A549 (cell line): ENCODE measurements at regions of chr10 and their contacts with region 1.

Region 1: DNA sequence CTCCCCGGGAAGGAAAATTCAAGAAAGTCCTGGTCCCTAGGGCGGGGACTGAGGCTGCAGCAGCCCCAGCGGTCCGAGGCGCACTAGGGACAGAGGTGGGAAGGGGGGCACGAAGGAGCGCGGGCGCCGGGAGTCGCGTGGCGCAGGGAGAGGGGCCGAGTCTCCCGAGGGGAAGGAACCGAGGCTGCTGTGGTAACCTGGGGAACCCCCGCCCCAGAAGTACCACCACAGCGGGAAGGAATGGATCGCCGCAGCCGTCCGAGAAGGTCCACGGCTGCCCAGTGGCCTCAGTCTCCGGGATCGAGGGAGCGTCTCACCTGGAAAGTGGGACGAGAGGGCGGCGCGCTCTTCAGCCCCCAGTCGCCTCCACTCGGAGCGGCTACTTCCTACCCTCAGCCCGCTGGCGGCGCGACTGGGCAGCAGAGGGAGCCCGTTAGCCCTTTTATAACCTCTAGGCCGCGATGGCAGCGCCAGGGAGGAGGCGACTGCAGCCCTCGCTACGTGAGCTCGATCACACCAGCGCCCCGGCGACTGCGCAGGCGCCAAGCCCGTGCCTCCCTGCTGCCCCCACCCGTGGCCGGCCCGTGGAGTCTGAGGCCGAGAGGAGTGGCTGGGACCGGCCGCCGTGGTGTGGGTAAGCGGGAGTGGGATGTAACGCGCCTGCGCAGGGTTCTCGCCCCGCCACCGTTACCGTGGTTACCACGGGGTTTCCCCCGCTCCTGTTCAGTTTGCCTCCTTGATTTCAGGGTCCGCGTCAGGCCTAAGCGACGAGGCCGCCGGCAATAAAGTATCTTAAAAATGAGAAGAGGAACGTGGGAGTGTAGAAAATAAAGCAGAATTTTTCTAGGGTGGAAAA is at the start of gene P4HA1:
- DNase-seq: peak; percentile 94 to 98
- ATAC-seq: peak; percentile 90 to 96
- H3K4me3 ChIP-seq: peak within 1 kb of the TSS; percentile 75
- H3K27ac ChIP-seq: peak within 1 kb of the TSS; percentile 90 to 94
- H3K4me1 ChIP-seq: peaks cover 18% of the 10 kb centered on the region
- CTCF ChIP-seq: peak; percentile 74
- EP300 ChIP-seq: 0 out of 5 replicates have a peak, but pooled peaks of 1 of the 2 experiments have one; percentile 12
- POLR2A ChIP-seq: peak; percentile 99
- RAD21 ChIP-seq: peak; percentile 67 to 81
- polyA plus RNA-seq, gene P4HA1: 46.1 and 49.0 TPM in 2 replicates

Region 2: DNA sequence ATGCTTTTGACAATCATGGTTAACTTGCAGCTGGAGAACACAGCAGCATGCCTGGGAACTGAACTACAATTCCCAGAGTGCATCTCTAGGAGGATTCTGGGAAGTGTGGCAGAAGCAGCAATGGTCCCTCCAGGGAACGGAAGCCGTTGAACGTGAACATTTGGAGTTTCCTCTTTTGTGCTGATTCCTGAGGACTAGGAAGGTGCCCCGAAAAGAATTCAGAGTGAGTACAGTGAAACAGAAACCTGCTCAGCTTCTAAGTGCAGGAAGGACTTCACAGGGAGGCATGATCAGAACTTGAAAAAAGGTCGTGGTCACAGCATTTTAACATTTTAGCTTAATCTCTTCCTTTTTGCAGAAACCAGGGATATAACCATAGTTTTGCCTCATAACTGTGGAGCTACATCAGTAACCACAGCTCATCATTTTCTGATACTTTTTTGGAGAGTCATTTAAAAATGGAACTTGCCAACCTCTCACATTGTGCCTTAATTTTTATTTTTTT is 13.7 kb after region 1 on chr10 and contains the start of gene NUDT13:
- CTCF ChIA-PET with region 1: interaction called, 22 read pairs
- POLR2A ChIA-PET with region 1: interaction called, 55 read pairs
- DNase-seq: peak; percentile 77 to 84
- ATAC-seq: peak; percentile 98 to 100
- H3K4me3 ChIP-seq: peak within 1 kb of the TSS; percentile 65
- H3K27ac ChIP-seq: peak within 1 kb of the TSS; percentile 87 to 89
- H3K4me1 ChIP-seq: peaks cover 18% of the 10 kb centered on the region; the same call in 2 of the 3 replicates
- CTCF ChIP-seq: no peak
- EP300 ChIP-seq: no peak
- POLR2A ChIP-seq: no peak
- RAD21 ChIP-seq: no peak
- polyA plus RNA-seq, gene NUDT13: 4.9 TPM in 2 replicates

Region 3: GRCh38 chr10:73167783-73168464 is 71.2 kb after region 1 on chr10 and contains the starts of genes ECD and FAM149B1:
- CTCF ChIA-PET with region 1: interaction called, 9 read pairs
- POLR2A ChIA-PET with region 1: interaction called, 13 read pairs
- DNase-seq: peak; percentile 89 to 95
- ATAC-seq: peak; percentile 98
- H3K4me3 ChIP-seq: peak within 1 kb of the TSS; percentile 68
- H3K27ac ChIP-seq: peak within 1 kb of the TSS; percentile 77 to 95
- H3K4me1 ChIP-seq: 0 out of 3 replicates have a peak, but pooled peaks cover 6% of the 10 kb centered on the region
- CTCF ChIP-seq: no peak; the same call in 2 of the 3 replicates
- EP300 ChIP-seq: no peak
- POLR2A ChIP-seq: peak; percentile 81
- RAD21 ChIP-seq: no peak
- polyA plus RNA-seq, gene ECD: 53.3 and 53.6 TPM in 2 replicates
- polyA plus RNA-seq, gene FAM149B1: 25.5 and 26.7 TPM in 2 replicates

Region 4: DNA sequence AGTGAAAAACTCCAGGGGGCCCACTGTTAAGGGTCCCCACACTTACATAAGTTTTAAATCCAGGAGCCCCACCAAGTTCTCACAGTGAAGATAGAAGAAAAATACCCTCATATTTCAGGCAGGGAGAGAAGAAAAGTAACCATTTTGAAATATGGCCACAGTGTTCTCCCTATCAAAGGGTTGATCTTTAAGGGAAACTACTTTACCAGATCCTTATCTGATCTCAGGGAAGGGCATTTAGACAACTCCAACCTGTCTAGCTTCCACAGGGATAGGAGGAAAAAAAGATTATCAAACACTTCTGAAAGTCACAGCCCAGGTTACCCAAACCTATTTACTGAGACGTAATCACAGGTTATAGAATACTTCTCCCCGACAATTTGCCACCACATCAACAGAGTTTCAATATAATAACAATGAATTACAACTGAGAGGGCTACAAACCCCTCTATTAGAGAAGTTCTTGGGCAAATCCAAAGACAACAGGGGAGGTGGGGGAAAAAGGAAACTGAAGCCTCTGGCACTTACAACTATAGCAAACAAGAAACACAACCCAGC is 235.6 kb after region 1 on chr10:
- CTCF ChIA-PET with region 1: no interaction called
- POLR2A ChIA-PET with region 1: no interaction called
- DNase-seq: no peak
- ATAC-seq: no peak
- H3K4me3 ChIP-seq: no peak overlapping the region
- H3K27ac ChIP-seq: no peak overlapping the region
- H3K4me1 ChIP-seq: no peaks in the 10 kb centered on the region
- CTCF ChIP-seq: no peak
- EP300 ChIP-seq: no peak
- POLR2A ChIP-seq: no peak
- RAD21 ChIP-seq: no peak